AG04450 (cell line): ENCODE measurements at regions of chr5 and their contacts with region 1.

Region 1: GRCh38 chr5:141664732-141665461 is 13.7 kb upstream of the FCHSD1 start:
- DNase-seq: no peak
- H3K4me3 ChIP-seq: no peak overlapping the region
- H3K27ac ChIP-seq: no peak overlapping the region
- H3K27me3 ChIP-seq: no peaks in the 10 kb centered on the region
- CTCF ChIP-seq: peak; percentile 93

Region 2: GRCh38 chr5:141650851-141651727 is 13.8 kb before region 1 on chr5 and contains the start of gene FCHSD1:
- CTCF ChIA-PET with region 1: interaction called, 10 read pairs
- POLR2A ChIA-PET with region 1: no interaction called
- DNase-seq: peak; percentile 50
- H3K4me3 ChIP-seq: peak within 1 kb of the TSS; percentile 85
- H3K27ac ChIP-seq: no peak within 1 kb of the TSS
- H3K27me3 ChIP-seq: no peaks in the 10 kb centered on the region
- CTCF ChIP-seq: no peak
- polyA plus RNA-seq, gene FCHSD1: 28.1 and 30.2 TPM in 2 replicates

Region 3: DNA sequence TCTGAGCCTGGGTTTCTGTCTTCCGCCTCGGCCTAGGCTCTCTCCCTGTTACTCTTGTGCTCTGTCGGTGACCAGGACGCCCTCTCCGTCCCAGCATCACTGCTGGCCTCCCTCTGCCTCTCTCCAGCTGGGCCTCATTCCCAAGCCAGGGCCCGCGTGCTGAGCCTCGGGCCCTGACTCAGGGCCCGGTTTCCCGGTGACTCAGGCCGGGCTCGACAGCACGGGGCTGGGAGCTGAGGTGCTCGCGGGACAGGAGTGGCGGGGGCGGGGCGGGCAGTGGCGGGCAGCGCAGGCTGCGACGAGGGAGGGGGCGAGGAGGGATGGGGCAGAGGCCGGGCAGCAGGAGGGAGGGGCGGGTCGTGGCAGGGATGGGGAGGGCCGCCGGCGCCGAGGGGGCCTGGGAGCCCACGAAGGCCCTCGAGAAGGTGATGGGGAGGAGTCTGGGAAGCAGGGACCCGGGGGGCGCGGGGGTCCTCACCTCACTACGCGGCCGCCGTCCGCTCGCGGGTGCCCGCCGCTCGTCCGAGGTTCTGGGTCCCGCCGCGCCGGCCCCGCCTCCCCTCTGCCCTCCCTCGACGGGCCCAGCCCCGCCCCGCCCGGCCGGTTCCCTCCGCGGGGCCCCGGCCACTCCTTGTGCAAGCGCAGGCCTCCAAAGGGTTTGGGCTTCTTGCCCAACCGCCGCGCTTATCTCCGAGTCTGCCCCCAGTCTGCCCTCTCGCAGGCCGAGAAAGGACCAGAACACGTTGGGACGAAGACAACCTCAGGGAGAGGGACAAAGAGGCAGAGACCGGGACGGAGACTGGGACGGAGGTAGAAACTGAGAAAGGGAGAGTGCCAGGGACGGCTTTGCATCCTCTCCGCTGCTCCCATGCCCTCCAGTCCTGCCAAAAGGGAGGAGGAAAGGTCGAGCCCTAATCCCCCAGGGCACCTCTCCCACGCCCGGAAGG is 17.1 kb after region 1 on chr5 and contains the start of gene ARAP3:
- CTCF ChIA-PET with region 1: interaction called, 12 read pairs
- POLR2A ChIA-PET with region 1: no interaction called
- DNase-seq: peak; percentile 43
- H3K4me3 ChIP-seq: peak within 1 kb of the TSS; percentile 54
- H3K27ac ChIP-seq: peak within 1 kb of the TSS; percentile 77
- H3K27me3 ChIP-seq: no peaks in the 10 kb centered on the region
- CTCF ChIP-seq: no peak
- polyA plus RNA-seq, gene ARAP3: 3.5 and 4.9 TPM in 2 replicates